HCT116 (cell line): ENCODE measurements at regions of chr10 and their contacts with region 1.

Region 1: DNA sequence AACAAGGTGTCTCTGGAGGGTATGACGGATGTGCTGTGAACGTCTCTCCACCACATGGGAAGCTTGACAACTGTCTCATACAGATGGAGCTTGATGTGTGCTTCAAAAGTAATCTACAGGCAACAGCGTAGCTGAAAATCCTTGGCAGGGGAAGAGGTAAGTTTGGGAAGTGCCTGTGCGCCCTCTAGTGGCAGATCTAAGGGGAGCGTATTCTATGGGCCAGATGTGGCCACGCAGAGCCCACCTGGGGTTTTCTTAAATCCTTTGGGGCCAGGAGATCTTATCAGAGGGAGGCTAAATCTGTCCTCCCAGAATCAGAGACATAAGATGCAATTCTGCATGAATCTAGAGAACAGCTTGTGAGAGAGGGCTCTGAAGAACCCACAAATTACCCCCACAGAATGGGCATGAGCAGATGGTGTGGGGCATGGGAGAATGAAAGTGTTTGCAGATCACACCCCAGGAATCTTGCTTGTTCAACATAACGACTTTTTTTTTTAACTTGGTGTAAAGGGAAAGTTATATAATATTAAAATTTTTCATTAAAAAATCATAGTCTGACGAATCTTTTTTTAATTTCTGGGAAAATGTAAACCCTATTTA is 91.2 kb upstream of the MPP7 start:
- DNase-seq: peak; percentile 69
- ATAC-seq: peak; percentile 94
- H3K4me3 ChIP-seq: peak overlapping the region in 1 of 2 experiments; percentile 33; a peak in 1 of 4 replicates
- H3K27ac ChIP-seq: peak overlapping the region; percentile 30
- H3K4me1 ChIP-seq: peaks cover 16 to 24% of the 10 kb centered on the region in 2 experiments; a peak in 3 of 4 replicates
- H3K27me3 ChIP-seq: no peaks in the 10 kb centered on the region
- CTCF ChIP-seq: peak; percentile 67 to 95 (median 94)
- POLR2A ChIP-seq: no peak
- RAD21 ChIP-seq: peak; percentile 89

Region 2: DNA sequence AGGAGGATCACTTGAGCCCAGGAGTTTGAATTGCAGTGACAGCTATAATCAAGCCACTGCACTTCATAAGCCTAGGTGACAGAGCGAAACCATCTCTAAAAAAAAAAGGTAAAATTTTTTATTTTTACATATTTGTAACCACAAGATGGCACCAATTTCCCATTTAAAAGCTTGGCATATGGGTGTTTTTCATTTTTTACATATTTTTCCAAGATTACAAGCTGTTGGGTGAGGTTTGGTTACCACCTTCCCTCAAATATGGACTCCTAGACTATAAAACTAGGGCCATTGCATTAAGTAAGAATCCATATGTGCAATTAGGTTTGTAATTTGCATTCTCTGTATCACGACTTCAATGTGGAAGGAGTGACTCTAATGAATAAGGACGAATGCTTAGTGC is 1024.2 kb before region 1 on chr10:
- CTCF ChIA-PET with region 1: interaction called, 13 read pairs
- POLR2A ChIA-PET with region 1: no interaction called
- RAD21 ChIA-PET with region 1: no interaction called
- intact Hi-C with region 1: no loop called
- DNase-seq: no peak
- ATAC-seq: peak; percentile 54
- H3K4me3 ChIP-seq: no peak overlapping the region
- H3K27ac ChIP-seq: no peak overlapping the region
- H3K4me1 ChIP-seq: no peaks in the 10 kb centered on the region
- H3K27me3 ChIP-seq: no peaks in the 10 kb centered on the region
- CTCF ChIP-seq: peak in 2 of 3 experiments; percentile 38 to 40; a peak in 3 of 6 replicates
- POLR2A ChIP-seq: no peak
- RAD21 ChIP-seq: peak; percentile 71

Region 3: GRCh38 chr10:28250782-28251181 is 143.3 kb before region 1 on chr10:
- CTCF ChIA-PET with region 1: interaction called, 12 read pairs
- POLR2A ChIA-PET with region 1: interaction called, 4 read pairs
- RAD21 ChIA-PET with region 1: interaction called, 4 to 13 read pairs
- intact Hi-C with region 1: no loop called
- DNase-seq: no peak
- ATAC-seq: no peak
- H3K4me3 ChIP-seq: no peak overlapping the region
- H3K27ac ChIP-seq: peak overlapping the region; percentile 44
- H3K4me1 ChIP-seq: peaks cover 60 to 88% of the 10 kb centered on the region in 2 experiments
- H3K27me3 ChIP-seq: no peaks in the 10 kb centered on the region
- CTCF ChIP-seq: peak; percentile 40 to 85 (median 66); a peak in 5 of 6 replicates
- POLR2A ChIP-seq: no peak
- RAD21 ChIP-seq: peak; percentile 80

Region 4: DNA sequence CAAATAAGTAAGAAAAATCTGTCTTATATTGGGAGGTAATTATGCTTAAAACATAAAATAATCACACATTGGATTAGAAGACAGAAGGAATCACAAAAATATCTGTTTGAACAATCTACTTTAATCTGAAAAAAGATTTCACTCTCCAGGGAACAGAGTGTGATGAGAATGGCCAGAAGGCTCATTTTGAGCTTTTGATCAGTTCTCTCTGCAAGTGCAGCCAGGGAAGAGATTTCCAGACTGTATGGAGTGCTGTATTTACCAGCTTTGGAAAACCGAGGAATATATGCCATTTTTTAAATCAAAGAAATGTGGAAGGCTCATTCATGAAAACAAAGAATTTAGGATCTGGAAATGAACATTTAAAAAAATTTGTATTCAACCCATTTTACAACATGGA is 55.9 kb after region 1 on chr10:
- CTCF ChIA-PET with region 1: no interaction called
- POLR2A ChIA-PET with region 1: no interaction called
- RAD21 ChIA-PET with region 1: no interaction called
- intact Hi-C with region 1: no loop called
- DNase-seq: no peak
- ATAC-seq: no peak
- H3K4me3 ChIP-seq: no peak overlapping the region
- H3K27ac ChIP-seq: no peak overlapping the region
- H3K4me1 ChIP-seq: no peaks in the 10 kb centered on the region
- H3K27me3 ChIP-seq: no peaks in the 10 kb centered on the region
- CTCF ChIP-seq: no peak
- POLR2A ChIP-seq: no peak
- RAD21 ChIP-seq: no peak

Region 5: DNA sequence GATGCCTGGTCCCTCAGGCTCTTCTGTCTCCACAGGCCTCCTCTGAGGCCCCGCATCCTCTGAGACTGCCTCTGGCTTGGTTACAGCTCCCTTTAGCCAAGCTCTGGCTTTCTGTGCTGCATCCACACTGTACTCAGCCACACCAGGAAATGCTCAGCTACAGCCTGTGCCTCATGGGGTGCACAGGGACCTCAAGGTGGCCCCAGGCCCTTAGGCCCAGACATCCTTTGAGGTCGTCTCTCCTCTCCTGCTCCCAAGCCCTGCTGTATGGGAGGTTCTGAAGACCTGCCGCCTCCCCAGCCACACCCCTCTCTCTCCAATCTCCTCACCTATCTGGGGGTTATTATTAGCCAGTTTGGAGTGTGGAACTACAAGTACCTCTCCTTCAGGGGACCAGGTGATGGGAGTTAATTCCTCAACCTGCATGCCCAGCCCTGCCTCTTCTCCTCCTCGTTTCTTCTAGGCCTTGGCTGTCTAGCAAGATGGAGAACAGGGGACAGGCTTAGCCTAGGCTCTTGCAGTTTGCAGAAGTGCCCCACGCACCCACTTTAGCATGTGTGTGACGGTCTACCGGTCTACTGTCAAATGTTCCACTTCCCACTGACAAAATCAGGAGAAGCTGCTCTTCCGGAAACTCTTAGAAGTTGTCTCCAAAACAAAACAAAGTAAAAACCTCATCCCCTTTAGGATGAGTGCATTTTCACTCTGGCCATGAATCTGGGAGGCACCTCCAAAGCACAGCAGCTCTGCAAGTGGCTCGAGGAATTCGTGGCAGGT is 74.8 kb after region 1 on chr10:
- CTCF ChIA-PET with region 1: no interaction called
- POLR2A ChIA-PET with region 1: no interaction called
- RAD21 ChIA-PET with region 1: no interaction called
- intact Hi-C with region 1: no loop called
- DNase-seq: no peak
- ATAC-seq: no peak
- H3K4me3 ChIP-seq: no peak overlapping the region
- H3K27ac ChIP-seq: no peak overlapping the region
- H3K4me1 ChIP-seq: no peaks in the 10 kb centered on the region
- H3K27me3 ChIP-seq: no peaks in the 10 kb centered on the region
- CTCF ChIP-seq: no peak
- POLR2A ChIP-seq: no peak
- RAD21 ChIP-seq: no peak

Region 6: DNA sequence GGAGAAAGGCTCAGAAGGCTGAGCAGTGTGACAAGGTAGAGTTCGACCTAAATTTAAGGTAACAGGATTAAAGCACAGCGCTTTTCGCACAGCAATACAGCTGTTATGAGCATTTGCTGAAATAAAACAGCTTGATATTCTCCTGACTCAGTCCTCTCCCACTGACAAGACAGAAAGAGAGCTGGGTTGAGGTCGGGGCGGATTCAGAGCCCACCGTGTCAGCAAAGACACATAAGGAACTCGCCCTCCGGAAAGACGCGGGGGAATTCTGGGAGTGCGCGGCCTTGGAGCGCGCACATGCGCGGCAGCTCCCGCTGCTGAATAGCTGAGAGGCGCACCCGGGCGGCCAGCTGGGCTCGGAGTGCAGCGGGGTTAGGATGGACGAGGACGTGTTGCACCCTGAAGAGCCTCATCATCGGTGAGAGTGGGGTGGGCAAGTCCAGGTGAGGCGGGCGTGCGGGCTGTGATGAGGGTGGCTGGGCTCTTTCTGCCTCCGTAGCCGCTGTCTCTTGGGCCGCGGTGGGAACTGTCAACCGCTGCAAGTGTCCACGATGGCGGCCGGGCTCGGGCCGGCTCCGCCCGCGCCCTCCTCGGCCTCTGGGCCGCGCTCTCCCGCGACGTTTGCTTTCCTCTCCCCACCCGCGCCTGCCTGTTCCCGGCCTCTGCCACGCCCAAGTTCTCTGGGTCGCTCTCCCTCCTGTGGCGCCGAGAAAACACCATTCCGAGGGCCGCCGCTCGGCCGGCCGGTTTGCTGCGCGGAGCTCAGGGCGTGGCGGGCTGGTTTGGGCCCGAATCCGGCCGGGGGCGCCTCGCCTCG is 1015.4 kb after region 1 on chr10:
- CTCF ChIA-PET with region 1: no interaction called
- POLR2A ChIA-PET with region 1: no interaction called
- RAD21 ChIA-PET with region 1: no interaction called
- intact Hi-C with region 1: no loop called
- DNase-seq: peak; percentile 43
- ATAC-seq: peak; percentile 96
- H3K4me3 ChIP-seq: peak overlapping the region; percentile 75 to 79
- H3K27ac ChIP-seq: peak overlapping the region; percentile 71
- H3K4me1 ChIP-seq: peaks cover 4 to 11% of the 10 kb centered on the region in 2 experiments; a peak in 3 of 4 replicates
- H3K27me3 ChIP-seq: no peaks in the 10 kb centered on the region
- CTCF ChIP-seq: no peak
- POLR2A ChIP-seq: peak; percentile 88
- RAD21 ChIP-seq: no peak